ENCODE measurements at regions of chr16 and their contacts with region 1.

Region 1: DNA sequence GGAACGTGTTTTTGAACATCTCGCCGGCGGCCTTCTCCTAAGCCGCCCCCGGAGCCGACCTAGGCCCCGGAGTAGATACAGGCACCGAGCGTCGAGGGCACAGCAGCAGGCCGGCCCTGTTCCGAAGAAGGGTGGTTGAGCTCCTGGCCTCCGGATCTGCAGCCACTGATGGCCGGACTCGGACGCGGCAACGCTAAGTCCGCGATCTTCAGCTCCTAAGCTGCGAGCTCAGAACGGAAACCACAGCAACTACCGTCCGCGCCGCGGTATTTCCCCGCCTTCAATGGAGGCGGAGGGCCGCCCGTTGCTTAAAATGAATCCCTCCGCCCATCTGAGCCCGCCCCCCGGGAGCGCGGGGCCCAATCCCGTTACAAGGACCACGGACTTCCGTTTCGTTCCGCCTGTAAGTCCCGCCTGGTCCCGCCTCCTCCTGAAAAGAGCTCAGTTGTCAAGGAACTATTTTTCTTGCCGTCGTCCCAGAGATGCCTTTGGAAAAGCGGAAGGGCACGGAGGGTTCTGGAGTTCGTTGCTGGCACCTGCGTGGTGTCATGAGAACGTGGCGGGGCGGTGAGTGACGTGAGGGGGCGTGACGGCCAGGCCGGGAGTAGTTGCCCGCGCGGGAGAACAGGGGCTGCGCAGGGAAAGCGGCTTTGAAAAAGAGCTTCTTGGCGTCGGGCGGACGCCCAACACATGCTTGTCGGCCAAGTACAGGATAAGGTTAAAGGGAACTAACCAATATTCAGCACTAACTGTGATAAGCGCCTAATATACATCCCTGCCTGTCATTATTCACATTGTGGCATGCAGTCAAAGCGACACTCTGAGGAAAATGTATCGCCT is at the start of gene CFAP20:
- DNase-seq: peak; percentile 99
- H3K4me3 Mint-ChIP-seq: peak within 1 kb of the TSS; percentile 68
- H3K27ac Mint-ChIP-seq: peak within 1 kb of the TSS; percentile 63
- H3K4me1 Mint-ChIP-seq: peaks cover 34% of the 10 kb centered on the region
- H3K27me3 Mint-ChIP-seq: no peaks in the 10 kb centered on the region
- CTCF ChIP-seq: no peak
- total RNA-seq, gene CFAP20: 54.1 and 63.8 TPM in 2 replicates

Region 2: DNA sequence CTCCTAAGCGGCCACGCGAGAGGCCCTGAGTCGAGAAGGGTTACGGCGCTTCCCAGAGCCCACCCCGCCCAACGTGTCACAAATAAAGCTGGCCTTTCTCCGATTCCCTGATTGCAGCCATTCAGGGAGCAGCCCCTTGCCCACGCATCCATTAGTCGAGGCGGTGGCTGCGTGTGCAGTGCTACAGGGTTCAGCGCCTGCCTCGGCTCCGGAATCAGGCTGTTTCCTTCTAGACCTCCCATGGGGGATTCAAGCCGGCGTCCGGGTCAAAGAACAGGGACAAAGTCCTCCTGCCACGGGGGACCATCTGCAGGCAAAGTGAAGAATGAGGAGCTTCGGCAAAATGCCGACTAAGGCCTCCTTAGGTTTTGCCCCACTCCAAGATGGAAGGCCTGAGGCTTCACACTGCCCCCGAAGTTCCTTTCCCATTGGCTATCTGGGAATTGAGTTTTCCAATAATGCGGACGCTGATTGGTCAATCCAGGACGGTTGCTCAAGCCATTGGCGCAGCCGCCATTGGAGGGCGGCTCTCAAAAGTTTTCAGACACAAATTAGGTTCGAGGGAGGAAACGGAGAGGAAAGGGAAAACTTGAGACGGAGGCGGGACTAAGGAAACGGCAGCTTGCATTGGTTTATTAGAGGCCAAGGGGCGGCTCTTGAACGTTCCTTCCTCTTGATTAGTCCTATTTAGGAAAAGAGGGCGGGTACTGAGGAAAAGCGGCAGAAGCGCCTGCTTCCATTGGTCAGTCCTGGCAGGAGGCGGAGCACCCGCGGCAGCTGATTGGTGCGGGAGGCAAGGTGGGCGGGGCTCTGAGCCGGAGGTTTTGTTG is 394.2 kb before region 1 on chr16:
- CTCF ChIA-PET with region 1: no interaction called
- intact Hi-C with region 1: loop called (anchors 10 kb)
- DNase-seq: peak; percentile 99
- H3K4me3 Mint-ChIP-seq: peak overlapping the region; percentile 89
- H3K27ac Mint-ChIP-seq: peak overlapping the region; percentile 88
- H3K4me1 Mint-ChIP-seq: peaks cover 13% of the 10 kb centered on the region
- H3K27me3 Mint-ChIP-seq: peaks cover 19% of the 10 kb centered on the region
- CTCF ChIP-seq: no peak

Region 3: GRCh38 chr16:57893559-57894389 is 235.5 kb before region 1 on chr16:
- CTCF ChIA-PET with region 1: no interaction called
- intact Hi-C with region 1: loop called (anchors 5 kb)
- DNase-seq: peak; percentile 85
- H3K4me3 Mint-ChIP-seq: peak overlapping the region; percentile 50
- H3K27ac Mint-ChIP-seq: peak overlapping the region; percentile 98
- H3K4me1 Mint-ChIP-seq: peaks cover 50% of the 10 kb centered on the region
- H3K27me3 Mint-ChIP-seq: no peaks in the 10 kb centered on the region
- CTCF ChIP-seq: no peak

Region 4: DNA sequence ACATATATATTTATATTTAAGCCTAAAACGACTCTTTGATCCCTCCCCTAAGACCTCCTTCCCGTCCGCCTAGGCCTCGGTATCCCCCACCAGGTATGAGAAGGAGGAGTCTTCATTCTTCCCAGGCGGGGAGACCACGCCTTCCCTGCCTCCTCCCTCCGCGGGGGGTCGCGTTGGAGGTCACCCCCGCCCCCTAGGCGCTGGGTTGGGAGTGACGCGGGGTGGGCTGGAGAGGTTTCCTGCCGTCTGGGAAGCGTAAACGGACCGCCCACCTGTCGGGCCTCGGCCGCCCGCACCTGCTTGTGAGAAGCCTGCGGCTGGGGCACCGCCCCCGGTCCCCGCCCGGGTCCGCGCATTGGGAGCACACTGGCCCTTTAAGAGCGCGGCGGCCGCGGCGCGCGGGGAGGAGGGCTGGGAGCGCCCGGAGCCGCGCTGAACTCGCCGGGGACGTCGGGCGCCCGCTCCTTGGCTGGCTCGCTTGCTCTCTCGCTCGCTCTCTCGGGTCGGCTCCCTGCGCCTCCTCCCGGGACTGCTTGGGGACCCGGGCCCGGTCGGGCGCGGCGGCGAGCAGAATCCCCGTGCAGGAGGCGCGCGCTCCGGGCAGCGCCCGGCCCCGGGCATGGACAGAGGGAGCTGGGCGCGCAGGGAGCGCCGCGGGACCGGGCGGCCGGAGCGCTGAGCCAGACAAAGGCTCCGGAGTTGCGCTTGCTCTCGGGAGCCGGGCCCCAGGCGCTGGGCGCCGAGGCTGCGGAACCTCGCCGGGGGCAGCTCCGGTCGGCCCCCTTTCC is 103.8 kb before region 1 on chr16 and contains the start of gene MMP15:
- CTCF ChIA-PET with region 1: interaction called, 13 read pairs
- intact Hi-C with region 1: no loop called
- DNase-seq: peak; percentile 97
- H3K4me3 Mint-ChIP-seq: peak within 1 kb of the TSS; percentile 79
- H3K27ac Mint-ChIP-seq: peak within 1 kb of the TSS; percentile 88
- H3K4me1 Mint-ChIP-seq: peaks cover 67% of the 10 kb centered on the region
- H3K27me3 Mint-ChIP-seq: no peaks in the 10 kb centered on the region
- CTCF ChIP-seq: no peak
- total RNA-seq, gene MMP15: 81.4 and 93.7 TPM in 2 replicates

Region 5: GRCh38 chr16:58360041-58360634 is 230.8 kb after region 1 on chr16:
- CTCF ChIA-PET with region 1: no interaction called
- intact Hi-C with region 1: no loop called
- DNase-seq: no peak
- H3K4me3 Mint-ChIP-seq: no peak overlapping the region
- H3K27ac Mint-ChIP-seq: no peak overlapping the region
- H3K4me1 Mint-ChIP-seq: no peaks in the 10 kb centered on the region
- H3K27me3 Mint-ChIP-seq: peaks cover 59% of the 10 kb centered on the region
- CTCF ChIP-seq: no peak